Activated B cell treated with CpG ODN at 0.5 μM for 24 hours (primary cell): ENCODE measurements at regions of chr5 and their contacts with region 1.

Region 1: GRCh38 chr5:151157426-151158286 is at the start of gene ANXA6:
- DNase-seq: peak; percentile 62
- ATAC-seq: peak; percentile 72
- H3K4me3 Mint-ChIP-seq: peak within 1 kb of the TSS; percentile 91
- H3K27ac Mint-ChIP-seq: peak within 1 kb of the TSS; percentile 94
- H3K4me1 Mint-ChIP-seq: peaks cover 77% of the 10 kb centered on the region
- H3K27me3 Mint-ChIP-seq: no peaks in the 10 kb centered on the region
- CTCF ChIP-seq: no peak
- total RNA-seq, gene ANXA6: 367 and 379 TPM in 2 replicates

Region 2: DNA sequence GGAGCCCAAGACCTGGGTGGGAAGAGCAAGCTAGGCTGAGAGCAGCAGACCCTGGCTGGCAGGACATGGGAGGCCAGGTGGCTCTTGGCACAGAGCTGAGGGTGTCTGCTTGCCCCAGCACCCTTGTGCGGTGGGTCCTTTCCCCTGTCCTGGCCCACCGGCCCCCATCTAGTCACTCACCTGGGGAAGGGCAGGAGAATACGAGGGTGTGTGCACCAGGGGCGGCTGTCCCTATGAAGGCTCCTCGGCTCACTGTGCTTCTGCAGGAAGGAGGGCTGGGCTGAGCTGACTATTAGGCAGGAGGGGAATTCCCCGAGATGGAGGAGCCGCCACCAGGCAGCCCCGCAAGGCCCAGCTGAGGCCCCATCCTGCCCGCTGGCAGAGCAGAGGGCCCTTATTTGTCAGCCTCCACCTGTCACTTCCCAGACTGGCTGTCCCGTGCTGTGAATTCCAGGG is 70.7 kb before region 1 on chr5:
- CTCF ChIA-PET with region 1: no interaction called
- POLR2A ChIA-PET with region 1: interaction called, 4 read pairs
- intact Hi-C with region 1: loop called (anchors 2 kb)
- DNase-seq: peak; percentile 57
- ATAC-seq: peak; percentile 86
- H3K4me3 Mint-ChIP-seq: peak overlapping the region; percentile 83
- H3K27ac Mint-ChIP-seq: peak overlapping the region; percentile 76
- H3K4me1 Mint-ChIP-seq: peaks cover 70% of the 10 kb centered on the region
- H3K27me3 Mint-ChIP-seq: no peaks in the 10 kb centered on the region
- CTCF ChIP-seq: no peak

Region 3: GRCh38 chr5:151134238-151134637 is 23.4 kb before region 1 on chr5:
- CTCF ChIA-PET with region 1: interaction called, 309 read pairs
- POLR2A ChIA-PET with region 1: interaction called, 20 read pairs
- intact Hi-C with region 1: no loop called
- DNase-seq: no peak
- ATAC-seq: peak; percentile 23
- H3K4me3 Mint-ChIP-seq: peak overlapping the region; percentile 45
- H3K27ac Mint-ChIP-seq: peak overlapping the region; percentile 83
- H3K4me1 Mint-ChIP-seq: peaks cover 83% of the 10 kb centered on the region
- H3K27me3 Mint-ChIP-seq: no peaks in the 10 kb centered on the region
- CTCF ChIP-seq: no peak

Region 4: GRCh38 chr5:151141535-151141934 is 16.1 kb before region 1 on chr5:
- CTCF ChIA-PET with region 1: interaction called, 7 read pairs
- POLR2A ChIA-PET with region 1: interaction called, 92 read pairs
- intact Hi-C with region 1: loop called (anchors 1 kb)
- DNase-seq: peak; percentile 38
- ATAC-seq: peak; percentile 92
- H3K4me3 Mint-ChIP-seq: peak overlapping the region; percentile 85
- H3K27ac Mint-ChIP-seq: peak overlapping the region; percentile 93
- H3K4me1 Mint-ChIP-seq: peaks cover 85% of the 10 kb centered on the region
- H3K27me3 Mint-ChIP-seq: no peaks in the 10 kb centered on the region
- CTCF ChIP-seq: no peak